AG04449 (cell line): ENCODE measurements at regions of chr4 and their contacts with region 1.

Region 1: GRCh38 chr4:17447675-17448298 is 64.1 kb downstream of the QDPR start:
- DNase-seq: no peak
- H3K4me3 ChIP-seq: no peak overlapping the region
- CTCF ChIP-seq: peak; percentile 66

Region 2: DNA sequence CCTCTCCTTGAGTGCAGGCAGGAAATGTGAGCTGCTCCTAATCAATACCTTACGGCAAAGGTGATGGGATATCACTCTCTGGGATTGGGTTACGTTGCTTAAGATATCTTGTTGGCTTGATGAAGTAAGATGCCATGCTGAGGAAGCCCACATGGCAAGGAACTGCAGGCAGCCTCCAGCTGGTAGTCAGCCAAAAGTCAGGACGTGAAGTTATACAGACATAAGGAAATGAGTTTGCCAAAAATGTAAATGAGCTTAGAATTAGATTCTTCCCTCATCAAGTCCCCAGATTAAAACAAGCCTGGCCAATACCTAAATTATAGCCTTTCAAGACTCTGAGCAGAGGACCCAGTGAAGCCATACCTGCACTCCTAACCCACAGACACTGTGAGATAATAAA is 90.9 kb before region 1 on chr4:
- CTCF ChIA-PET with region 1: interaction called, 15 read pairs
- POLR2A ChIA-PET with region 1: no interaction called
- DNase-seq: no peak
- H3K4me3 ChIP-seq: no peak overlapping the region
- CTCF ChIP-seq: no peak

Region 3: DNA sequence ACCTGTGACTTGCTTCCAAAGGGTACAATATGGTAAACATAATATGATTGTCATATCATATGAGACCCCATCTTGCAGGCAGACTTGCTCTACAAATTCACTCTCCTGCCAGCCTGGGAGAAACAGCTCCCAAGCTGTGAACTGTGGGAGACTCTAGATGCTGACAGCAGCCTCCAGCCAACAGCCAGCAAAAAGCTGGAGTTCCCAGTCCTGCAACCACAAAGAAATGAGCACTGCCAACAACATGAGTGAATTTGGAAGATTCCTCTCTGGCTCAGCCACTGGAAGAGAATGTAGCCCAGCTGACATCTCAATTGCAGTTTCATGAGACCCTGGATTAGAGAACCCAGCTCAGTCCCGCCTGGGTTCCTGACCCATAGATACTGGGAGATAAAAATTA is 81.3 kb before region 1 on chr4:
- CTCF ChIA-PET with region 1: interaction called, 16 read pairs
- POLR2A ChIA-PET with region 1: no interaction called
- DNase-seq: no peak
- H3K4me3 ChIP-seq: no peak overlapping the region
- CTCF ChIP-seq: no peak